Natural killer cell (primary cell): ENCODE measurements at regions of chr1 and their contacts with region 1.

Region 1: GRCh38 chr1:36149237-36149972 is at the start of gene TRAPPC3:
- DNase-seq: peak; percentile 99 to 100
- ATAC-seq: peak; percentile 81 to 97 (median 90)
- H3K4me3 ChIP-seq: peak within 1 kb of the TSS; percentile 78
- H3K4me3 Mint-ChIP-seq: peak within 1 kb of the TSS; percentile 100
- H3K27ac ChIP-seq: peak within 1 kb of the TSS; percentile 92
- H3K27ac Mint-ChIP-seq: peak within 1 kb of the TSS; percentile 99 to 100
- H3K4me1 ChIP-seq: peaks cover 47% of the 10 kb centered on the region
- H3K4me1 Mint-ChIP-seq: peaks cover 52 to 66% of the 10 kb centered on the region in 2 donors
- H3K27me3 ChIP-seq: no peaks in the 10 kb centered on the region
- H3K27me3 Mint-ChIP-seq: no peaks in the 10 kb centered on the region
- CTCF ChIP-seq: peak; percentile 76
- total RNA-seq, gene TRAPPC3: 28.0 to 34.7 (median 34.3) TPM

Region 2: DNA sequence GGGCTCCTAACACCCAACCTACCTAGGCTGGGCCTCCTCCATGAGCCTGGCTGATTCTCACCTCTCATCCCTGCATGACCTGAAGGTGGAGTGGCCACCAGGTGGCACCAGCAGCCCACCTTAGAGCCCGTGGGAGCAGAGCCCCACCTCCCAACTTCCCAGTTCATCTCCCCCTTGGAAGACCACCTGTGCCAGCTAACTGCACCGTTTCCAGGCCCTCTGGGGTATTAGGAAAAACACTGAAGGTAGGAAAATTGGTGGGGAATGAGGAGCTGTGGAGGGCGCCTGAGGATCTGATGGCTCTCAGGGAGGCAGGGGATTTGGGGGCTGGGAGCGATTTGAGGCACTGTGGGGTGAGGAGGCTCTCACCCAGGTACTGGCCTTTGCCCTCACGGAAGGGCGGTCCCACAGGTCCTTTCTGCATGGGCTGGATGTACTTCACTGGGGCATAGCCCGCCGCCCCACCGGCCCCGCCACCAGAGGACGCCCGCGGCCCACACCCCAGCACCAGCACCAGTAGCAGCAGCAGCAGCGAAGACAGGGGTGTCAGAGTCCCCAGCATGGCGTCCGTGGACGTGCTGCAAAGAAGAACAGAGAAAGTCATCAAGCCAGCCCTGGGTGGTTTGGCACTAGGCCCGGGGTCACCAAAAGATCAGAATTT is 49.6 kb before region 1 on chr1:
- intact Hi-C with region 1: no loop called
- DNase-seq: peak; percentile 68 to 86
- ATAC-seq: peak; percentile 81 to 92 (median 89)
- H3K4me3 ChIP-seq: no peak overlapping the region
- H3K4me3 Mint-ChIP-seq: no peak overlapping the region
- H3K27ac ChIP-seq: no peak overlapping the region
- H3K27ac Mint-ChIP-seq: no peak overlapping the region
- H3K4me1 ChIP-seq: peaks cover 10% of the 10 kb centered on the region
- H3K4me1 Mint-ChIP-seq: peaks cover 0 to 5% of the 10 kb centered on the region in 2 donors
- H3K27me3 ChIP-seq: no peaks in the 10 kb centered on the region
- H3K27me3 Mint-ChIP-seq: no peaks in the 10 kb centered on the region
- CTCF ChIP-seq: peak; percentile 83

Region 3: GRCh38 chr1:36187800-36188593 is 38.6 kb after region 1 on chr1:
- intact Hi-C with region 1: loop called (anchors 1 kb)
- DNase-seq: peak; percentile 69 to 93
- ATAC-seq: peak; percentile 97 to 99 (median 98)
- H3K4me3 ChIP-seq: no peak overlapping the region
- H3K4me3 Mint-ChIP-seq: no peak overlapping the region
- H3K27ac ChIP-seq: no peak overlapping the region
- H3K27ac Mint-ChIP-seq: peak overlapping the region; percentile 47 to 89
- H3K4me1 ChIP-seq: peaks cover 9% of the 10 kb centered on the region
- H3K4me1 Mint-ChIP-seq: peaks cover 6 to 10% of the 10 kb centered on the region in 2 donors
- H3K27me3 ChIP-seq: no peaks in the 10 kb centered on the region
- H3K27me3 Mint-ChIP-seq: no peaks in the 10 kb centered on the region
- CTCF ChIP-seq: peak; percentile 77

Region 4: GRCh38 chr1:36285448-36286101 is 136.2 kb after region 1 on chr1:
- intact Hi-C with region 1: loop called (anchors 1 kb)
- DNase-seq: peak; percentile 33 to 94
- ATAC-seq: peak; percentile 93 to 98 (median 94)
- H3K4me3 ChIP-seq: no peak overlapping the region
- H3K4me3 Mint-ChIP-seq: no peak overlapping the region
- H3K27ac ChIP-seq: no peak overlapping the region
- H3K27ac Mint-ChIP-seq: peak overlapping the region; percentile 63 to 66
- H3K4me1 ChIP-seq: no peaks in the 10 kb centered on the region
- H3K4me1 Mint-ChIP-seq: peaks cover 7 to 22% of the 10 kb centered on the region in 2 donors
- H3K27me3 ChIP-seq: no peaks in the 10 kb centered on the region
- H3K27me3 Mint-ChIP-seq: no peaks in the 10 kb centered on the region
- CTCF ChIP-seq: peak; percentile 87

Region 5: GRCh38 chr1:36397378-36398230 is 248.2 kb after region 1 on chr1 and contains the start of gene LSM10:
- intact Hi-C with region 1: loop called (anchors 5 kb)
- DNase-seq: peak; percentile 85 to 96
- ATAC-seq: peak; percentile 59 to 72 (median 60)
- H3K4me3 ChIP-seq: peak within 1 kb of the TSS; percentile 98
- H3K4me3 Mint-ChIP-seq: peak within 1 kb of the TSS; percentile 100
- H3K27ac ChIP-seq: peak within 1 kb of the TSS; percentile 93
- H3K27ac Mint-ChIP-seq: peak within 1 kb of the TSS; percentile 99 to 100
- H3K4me1 ChIP-seq: peaks cover 55% of the 10 kb centered on the region
- H3K4me1 Mint-ChIP-seq: peaks cover 46 to 48% of the 10 kb centered on the region in 2 donors
- H3K27me3 ChIP-seq: no peaks in the 10 kb centered on the region
- H3K27me3 Mint-ChIP-seq: no peaks in the 10 kb centered on the region
- CTCF ChIP-seq: no peak
- total RNA-seq, gene LSM10: 25.2 to 30.4 (median 26.6) TPM

Region 6: DNA sequence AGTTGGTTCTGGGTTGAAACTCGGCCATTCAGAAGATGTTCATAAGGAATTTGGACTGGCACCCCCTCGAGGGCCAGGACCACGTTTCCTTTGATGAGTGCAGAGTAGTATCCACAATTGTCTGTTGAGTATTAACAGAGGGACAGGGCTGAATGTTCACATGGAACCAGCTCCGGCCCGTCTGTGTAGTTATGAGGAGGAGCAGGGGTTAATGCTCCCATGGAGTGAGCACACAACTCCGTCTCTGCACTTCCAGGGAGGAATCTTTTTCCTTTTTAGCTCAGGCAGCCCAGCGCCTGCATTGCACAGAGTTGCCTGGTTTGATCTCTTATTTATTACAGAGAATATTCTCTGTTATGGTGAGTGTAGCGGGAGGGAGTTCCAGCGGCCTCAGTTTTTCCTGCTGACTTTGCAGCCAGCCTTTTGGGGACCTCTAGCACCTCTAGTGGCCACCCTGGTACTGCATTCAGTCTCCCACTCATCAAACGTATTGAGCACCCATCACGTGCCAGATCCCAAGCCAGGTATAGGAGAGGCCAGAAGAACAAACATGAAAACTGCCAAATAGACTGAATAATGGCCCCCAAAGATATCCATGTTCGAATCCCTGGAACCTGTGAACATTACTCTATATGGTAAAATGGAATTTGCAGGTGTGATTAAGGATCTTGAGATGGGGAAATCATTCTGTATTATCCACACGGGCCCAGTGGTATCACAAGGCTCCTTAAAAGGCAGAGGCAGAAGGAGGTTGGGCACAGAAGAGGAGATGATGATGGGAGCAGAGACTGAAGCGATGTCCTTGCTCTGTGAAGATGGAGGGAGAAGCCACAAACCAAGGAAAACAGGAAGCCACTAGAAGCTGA is 501.0 kb after region 1 on chr1:
- intact Hi-C with region 1: no loop called
- DNase-seq: peak; percentile 54 to 70
- ATAC-seq: peak; percentile 70 to 90 (median 80)
- H3K4me3 ChIP-seq: no peak overlapping the region
- H3K4me3 Mint-ChIP-seq: no peak overlapping the region
- H3K27ac ChIP-seq: no peak overlapping the region
- H3K27ac Mint-ChIP-seq: no peak overlapping the region
- H3K4me1 ChIP-seq: peaks cover 10% of the 10 kb centered on the region
- H3K4me1 Mint-ChIP-seq: peaks cover 20 to 26% of the 10 kb centered on the region in 2 donors
- H3K27me3 ChIP-seq: peaks cover 6% of the 10 kb centered on the region
- H3K27me3 Mint-ChIP-seq: peaks cover 36 to 48% of the 10 kb centered on the region in 2 donors
- CTCF ChIP-seq: peak; percentile 97

Region 7: GRCh38 chr1:37479255-37480124 is 1330.1 kb after region 1 on chr1:
- intact Hi-C with region 1: loop called (anchors 2 kb)
- DNase-seq: peak; percentile 81 to 92
- ATAC-seq: peak; percentile 41 to 72 (median 50)
- H3K4me3 ChIP-seq: peak overlapping the region; percentile 93
- H3K4me3 Mint-ChIP-seq: peak overlapping the region; percentile 95
- H3K27ac ChIP-seq: peak overlapping the region; percentile 99
- H3K27ac Mint-ChIP-seq: peak overlapping the region; percentile 99 to 100
- H3K4me1 ChIP-seq: peaks cover 75% of the 10 kb centered on the region
- H3K4me1 Mint-ChIP-seq: peaks cover 63 to 81% of the 10 kb centered on the region in 2 donors
- H3K27me3 ChIP-seq: no peaks in the 10 kb centered on the region
- H3K27me3 Mint-ChIP-seq: no peaks in the 10 kb centered on the region
- CTCF ChIP-seq: no peak